CD4-positive, alpha-beta memory T cell (primary cell): ENCODE measurements at regions of chr2 and their contacts with region 1.

Region 1: DNA sequence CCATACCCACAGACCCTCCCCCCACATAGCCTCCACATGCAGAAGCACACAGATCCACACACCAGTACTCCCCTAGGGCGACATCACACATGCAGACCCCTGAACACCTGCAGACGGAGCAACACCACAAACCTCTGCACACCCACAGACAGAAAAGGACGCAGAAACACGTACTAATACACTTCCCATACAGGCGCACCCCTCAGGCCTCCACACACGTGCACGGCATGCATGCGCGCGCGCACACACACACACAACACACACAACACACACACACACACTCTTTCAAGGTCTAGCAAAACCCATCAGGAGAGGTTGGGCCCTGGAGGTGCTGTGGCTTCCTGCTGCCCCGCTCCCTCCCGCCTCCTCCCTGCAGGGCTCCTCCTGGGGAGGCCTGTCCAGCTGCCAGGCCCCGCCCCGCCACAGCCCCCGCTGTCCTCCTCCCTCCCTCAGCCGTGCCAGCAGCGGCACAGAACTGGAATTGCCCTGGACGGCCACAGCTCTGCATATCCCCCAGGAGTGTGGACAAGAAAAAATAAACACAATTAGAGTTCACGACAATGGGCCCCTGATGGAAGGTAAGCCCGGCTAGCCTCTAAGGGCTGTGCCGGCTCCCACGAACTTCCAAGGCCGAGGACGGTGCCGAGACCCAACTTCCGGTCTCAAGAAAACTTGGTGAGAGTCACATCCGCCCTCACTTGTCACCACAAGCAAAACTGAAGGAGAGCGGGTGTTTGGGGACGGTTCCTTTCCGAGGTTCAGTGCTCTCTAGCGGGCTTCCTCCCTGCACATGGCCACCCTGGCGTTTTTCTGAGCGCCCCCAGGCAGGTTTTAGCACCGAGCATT is 6.8 kb downstream of the ZFP36L2 start:
- DNase-seq: peak; percentile 88 to 92 (median 91)
- H3K4me3 ChIP-seq: peak overlapping the region; percentile 84 to 92
- H3K4me3 Mint-ChIP-seq: peak overlapping the region; percentile 80 to 98 (median 96)
- H3K27ac ChIP-seq: peak overlapping the region; percentile 90
- H3K27ac Mint-ChIP-seq: peak overlapping the region; percentile 93 to 100 (median 98)
- H3K4me1 ChIP-seq: peaks cover 60% of the 10 kb centered on the region
- H3K4me1 Mint-ChIP-seq: peaks cover 31 to 62% (median 40%) of the 10 kb centered on the region in 4 donors
- H3K27me3 ChIP-seq: no peaks in the 10 kb centered on the region
- H3K27me3 Mint-ChIP-seq: peaks cover 0 to 5% of the 10 kb centered on the region in 2 donors

Region 2: GRCh38 chr2:42446503-42447271 is 772.9 kb before region 1 on chr2:
- CTCF ChIA-PET with region 1: no interaction called
- POLR2A ChIA-PET with region 1: no interaction called
- intact Hi-C with region 1: no loop called
- DNase-seq: no peak
- H3K4me3 ChIP-seq: no peak overlapping the region
- H3K4me3 Mint-ChIP-seq: no peak overlapping the region
- H3K27ac ChIP-seq: no peak overlapping the region
- H3K27ac Mint-ChIP-seq: no peak overlapping the region
- H3K4me1 ChIP-seq: no peaks in the 10 kb centered on the region
- H3K4me1 Mint-ChIP-seq: no peaks in the 10 kb centered on the region
- H3K27me3 ChIP-seq: no peaks in the 10 kb centered on the region
- H3K27me3 Mint-ChIP-seq: peaks cover 5 to 6% of the 10 kb centered on the region in 2 donors

Region 3: GRCh38 chr2:42810121-42810970 is 409.3 kb before region 1 on chr2:
- CTCF ChIA-PET with region 1: no interaction called
- POLR2A ChIA-PET with region 1: interaction called, 34 read pairs
- intact Hi-C with region 1: no loop called
- DNase-seq: peak; percentile 96 to 97 (median 97)
- H3K4me3 ChIP-seq: peak overlapping the region; percentile 90 to 98
- H3K4me3 Mint-ChIP-seq: peak overlapping the region; percentile 93 to 99 (median 97)
- H3K27ac ChIP-seq: peak overlapping the region; percentile 81
- H3K27ac Mint-ChIP-seq: peak overlapping the region; percentile 95 to 99 (median 99)
- H3K4me1 ChIP-seq: peaks cover 9% of the 10 kb centered on the region
- H3K4me1 Mint-ChIP-seq: peaks cover 9 to 33% (median 17%) of the 10 kb centered on the region in 4 donors
- H3K27me3 ChIP-seq: no peaks in the 10 kb centered on the region
- H3K27me3 Mint-ChIP-seq: peaks cover 0 to 2% of the 10 kb centered on the region in 2 donors

Region 4: GRCh38 chr2:43158259-43158880 is 61.2 kb before region 1 on chr2:
- CTCF ChIA-PET with region 1: interaction called, 5 read pairs
- POLR2A ChIA-PET with region 1: interaction called, 6,960 read pairs
- intact Hi-C with region 1: loop called (anchors 1 kb)
- DNase-seq: peak in 1 of 5 donors; percentile 55
- H3K4me3 ChIP-seq: peak overlapping the region; percentile 30 to 40
- H3K4me3 Mint-ChIP-seq: peak overlapping the region; percentile 75 to 87 (median 80)
- H3K27ac ChIP-seq: peak overlapping the region; percentile 84
- H3K27ac Mint-ChIP-seq: peak overlapping the region; percentile 97 to 99 (median 99)
- H3K4me1 ChIP-seq: peaks cover 76% of the 10 kb centered on the region
- H3K4me1 Mint-ChIP-seq: peaks cover 41 to 94% (median 66%) of the 10 kb centered on the region in 4 donors
- H3K27me3 ChIP-seq: no peaks in the 10 kb centered on the region
- H3K27me3 Mint-ChIP-seq: no peaks in the 10 kb centered on the region

Region 5: DNA sequence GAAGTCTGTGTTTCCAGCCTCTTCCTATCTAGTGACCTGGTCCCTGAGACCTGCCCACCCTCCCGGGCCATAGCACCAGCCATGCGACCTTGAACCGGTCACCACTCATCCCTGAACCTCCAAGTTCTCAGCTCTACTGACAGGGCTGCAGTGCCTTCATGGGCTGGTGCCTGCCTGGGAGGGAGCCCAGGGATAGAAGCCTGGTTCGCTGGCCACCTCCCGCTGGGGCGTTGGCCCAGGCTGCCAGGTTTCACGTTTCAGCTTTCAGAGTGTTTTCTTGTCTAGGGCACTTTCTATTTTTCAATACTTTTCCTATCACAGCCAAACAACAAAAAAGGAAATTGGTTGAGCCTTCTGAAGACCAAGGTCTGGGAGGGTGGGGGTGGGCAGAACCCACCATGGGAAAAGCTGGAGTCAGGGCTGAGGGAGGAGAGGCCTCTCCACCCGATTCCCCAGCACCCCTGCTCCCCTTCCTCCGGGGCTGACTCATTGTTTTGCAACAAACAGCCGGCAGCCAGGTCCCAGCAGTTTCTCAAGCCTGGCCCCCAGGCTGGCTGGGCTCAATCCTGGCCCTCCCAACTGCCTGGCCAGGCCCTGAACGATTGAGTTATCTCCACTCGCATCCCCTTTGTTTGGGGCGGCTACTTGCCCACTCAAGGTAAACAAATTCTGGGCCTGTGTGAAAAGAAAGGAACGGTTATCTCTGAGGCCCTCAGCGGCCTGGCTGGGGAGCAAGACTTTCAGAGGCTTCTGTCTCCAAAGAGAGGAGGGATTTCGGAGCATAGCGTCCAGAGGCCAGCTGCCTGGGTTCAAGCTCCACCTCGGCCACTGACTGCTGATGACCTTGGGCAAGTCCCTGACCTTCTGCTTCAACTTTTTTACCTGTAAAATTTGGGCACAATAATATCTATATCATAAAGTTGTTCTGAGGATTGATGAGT is 40.7 kb before region 1 on chr2:
- CTCF ChIA-PET with region 1: interaction called, 319 read pairs
- POLR2A ChIA-PET with region 1: interaction called, 6,960 read pairs
- intact Hi-C with region 1: loop called (anchors 1 kb)
- DNase-seq: peak in 1 of 5 donors; percentile 61
- H3K4me3 ChIP-seq: peak overlapping the region in 1 of 2 donors; percentile 7
- H3K4me3 Mint-ChIP-seq: peak overlapping the region in 7 of 8 donors; percentile 54 to 82 (median 72)
- H3K27ac ChIP-seq: peak overlapping the region; percentile 53
- H3K27ac Mint-ChIP-seq: peak overlapping the region; percentile 93 to 99 (median 98)
- H3K4me1 ChIP-seq: peaks cover 84% of the 10 kb centered on the region
- H3K4me1 Mint-ChIP-seq: peaks cover 58 to 80% (median 70%) of the 10 kb centered on the region in 4 donors
- H3K27me3 ChIP-seq: no peaks in the 10 kb centered on the region
- H3K27me3 Mint-ChIP-seq: no peaks in the 10 kb centered on the region

Region 6: GRCh38 chr2:43194121-43194869 is 25.3 kb before region 1 on chr2:
- CTCF ChIA-PET with region 1: interaction called, 22 read pairs
- POLR2A ChIA-PET with region 1: interaction called, 1,138 read pairs
- intact Hi-C with region 1: loop called (anchors 1 kb)
- DNase-seq: peak in 1 of 5 donors; percentile 33
- H3K4me3 ChIP-seq: peak overlapping the region; percentile 14 to 47
- H3K4me3 Mint-ChIP-seq: peak overlapping the region; percentile 85 to 98 (median 92)
- H3K27ac ChIP-seq: peak overlapping the region; percentile 95
- H3K27ac Mint-ChIP-seq: peak overlapping the region; percentile 95 to 100 (median 99)
- H3K4me1 ChIP-seq: peaks cover 73% of the 10 kb centered on the region
- H3K4me1 Mint-ChIP-seq: peaks cover 35 to 74% (median 53%) of the 10 kb centered on the region in 4 donors
- H3K27me3 ChIP-seq: no peaks in the 10 kb centered on the region
- H3K27me3 Mint-ChIP-seq: no peaks in the 10 kb centered on the region